ENCODE measurements at regions of chr3 and their contacts with region 1.

Region 1: DNA sequence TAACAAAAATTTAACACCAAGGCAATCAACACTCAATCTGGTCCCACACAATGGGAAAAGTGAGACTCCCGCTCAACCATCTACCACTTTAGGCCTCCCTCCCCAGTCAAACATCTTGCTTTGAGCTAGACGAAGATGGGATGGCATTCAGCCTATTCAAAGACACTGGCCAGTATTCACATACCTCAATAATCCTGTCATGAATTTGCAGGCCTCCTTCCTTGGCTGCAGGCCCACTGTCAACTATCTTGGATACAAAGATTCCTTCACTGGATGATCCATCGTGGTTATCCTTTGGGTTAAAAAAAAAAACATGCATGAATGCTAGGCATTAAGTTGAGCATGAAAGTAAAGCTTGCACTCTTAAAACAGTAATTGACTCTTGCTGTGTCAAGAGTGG is 22.6 kb downstream of the PDZRN3 start:
- DNase-seq: no peak
- ATAC-seq: no peak
- H3K4me3 ChIP-seq: no peak overlapping the region
- H3K4me1 ChIP-seq: no peaks in the 10 kb centered on the region
- CTCF ChIP-seq: no peak

Region 2: GRCh38 chr3:73520865-73521461 is 81.2 kb before region 1 on chr3:
- intact Hi-C with region 1: loop called in 1 of 2 experiments (anchors 10 kb)
- DNase-seq: peak in 2 of 3 donors; percentile 60 to 61
- ATAC-seq: peak; percentile 76
- H3K4me3 ChIP-seq: no peak overlapping the region
- H3K4me1 ChIP-seq: peaks cover 16% of the 10 kb centered on the region
- CTCF ChIP-seq: no peak

Measured in mucosa of descending colon (tissue), 3 donors.